ENCODE measurements at regions of chr13 and their contacts with region 1.

Region 1: DNA sequence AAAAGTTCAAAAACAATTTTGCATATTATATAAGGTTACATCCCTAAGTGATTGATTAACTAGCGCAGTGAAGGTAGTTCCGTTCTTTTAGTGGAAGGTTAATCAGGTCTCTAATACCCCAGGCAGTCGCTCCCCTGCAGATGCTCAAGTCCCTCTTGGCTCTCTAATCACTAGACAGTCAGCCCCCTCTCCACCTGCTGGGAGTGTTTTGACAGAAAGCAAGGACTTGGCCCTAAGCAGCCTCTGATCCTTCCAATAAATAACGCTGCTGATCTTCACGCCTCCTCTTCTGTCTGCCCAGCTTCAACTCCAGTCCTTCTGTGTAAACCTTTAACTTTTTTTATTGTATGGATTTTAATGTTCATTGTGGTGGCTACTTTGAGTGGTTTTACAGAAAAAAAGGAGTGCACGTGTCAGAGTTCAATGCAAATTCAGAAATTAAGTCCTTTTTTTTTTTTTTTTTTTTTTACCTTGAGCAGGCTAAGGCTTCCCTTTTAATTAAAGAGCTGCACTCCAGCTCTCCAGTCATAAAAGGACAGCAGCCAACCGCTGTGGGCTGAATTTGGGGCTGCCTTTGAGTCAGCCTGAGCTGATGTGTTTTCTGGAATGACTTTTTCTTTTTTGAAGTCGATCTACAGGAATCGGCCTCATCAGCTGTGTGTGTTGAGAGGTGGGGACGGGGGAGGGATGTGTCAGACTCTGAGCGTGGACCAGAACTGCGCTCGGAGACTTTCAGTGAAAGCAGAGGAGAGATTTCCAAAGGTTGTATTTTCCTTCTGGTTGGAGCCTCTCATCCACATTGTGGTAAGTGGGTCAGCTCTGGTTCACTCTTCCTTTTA is 33.8 kb upstream of the MYO16 start:
- DNase-seq: peak; percentile 82
- H3K4me3 Mint-ChIP-seq: no peak overlapping the region
- H3K27ac Mint-ChIP-seq: no peak overlapping the region
- H3K4me1 Mint-ChIP-seq: peaks cover 16% of the 10 kb centered on the region
- H3K27me3 Mint-ChIP-seq: peaks cover 10% of the 10 kb centered on the region

Region 2: GRCh38 chr13:108495646-108496361 is 99.9 kb before region 1 on chr13:
- CTCF ChIA-PET with region 1: no interaction called
- POLR2A ChIA-PET with region 1: no interaction called
- intact Hi-C with region 1: loop called (anchors 10 kb)
- DNase-seq: peak; percentile 36
- H3K4me3 Mint-ChIP-seq: peak overlapping the region; percentile 80
- H3K27ac Mint-ChIP-seq: no peak overlapping the region
- H3K4me1 Mint-ChIP-seq: peaks cover 20% of the 10 kb centered on the region
- H3K27me3 Mint-ChIP-seq: peaks cover 17% of the 10 kb centered on the region

Region 3: DNA sequence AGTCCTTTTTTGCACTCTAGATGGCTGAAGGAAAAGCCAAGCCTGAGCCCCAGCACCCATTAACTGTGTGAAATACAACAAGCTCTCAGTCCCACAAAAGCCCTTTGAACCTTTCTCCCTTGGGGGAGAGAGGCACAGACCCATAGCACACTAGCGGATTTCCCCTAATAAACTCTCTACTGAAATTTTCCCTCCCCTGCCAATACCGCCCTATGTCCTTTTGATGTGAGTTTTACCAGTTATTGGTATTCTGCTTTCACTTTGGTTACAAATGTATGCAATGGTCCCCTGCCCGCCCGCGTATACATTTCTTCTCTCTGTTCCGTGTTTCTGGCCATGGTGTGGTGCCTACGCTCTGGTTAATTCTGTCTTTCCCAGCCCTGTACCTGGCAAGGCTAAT is 20.2 kb before region 1 on chr13:
- CTCF ChIA-PET with region 1: no interaction called
- POLR2A ChIA-PET with region 1: no interaction called
- intact Hi-C with region 1: loop called (anchors 2 kb)
- DNase-seq: no peak
- H3K4me3 Mint-ChIP-seq: no peak overlapping the region
- H3K27ac Mint-ChIP-seq: no peak overlapping the region
- H3K4me1 Mint-ChIP-seq: no peaks in the 10 kb centered on the region
- H3K27me3 Mint-ChIP-seq: no peaks in the 10 kb centered on the region

Region 4: DNA sequence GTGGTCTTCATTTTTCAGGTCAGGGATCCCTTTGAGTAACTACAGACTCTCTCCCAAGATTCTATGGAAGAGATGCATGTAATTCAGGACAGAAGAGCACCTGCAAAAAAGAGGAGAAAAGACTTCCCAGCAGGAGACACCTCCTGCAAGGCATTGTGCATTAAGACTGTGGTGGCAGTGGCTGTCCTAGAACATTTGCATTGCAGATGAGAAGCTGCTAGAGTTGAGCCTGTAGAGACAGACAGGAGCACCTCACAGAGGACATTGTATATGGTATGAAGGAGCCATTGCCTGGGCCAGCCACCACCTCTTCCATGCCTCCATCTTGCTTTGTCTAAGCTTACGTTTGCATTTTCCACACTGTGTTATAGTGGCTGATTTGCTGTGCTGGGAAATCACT is 22.6 kb after region 1 on chr13:
- CTCF ChIA-PET with region 1: no interaction called
- POLR2A ChIA-PET with region 1: no interaction called
- intact Hi-C with region 1: no loop called
- DNase-seq: no peak
- H3K4me3 Mint-ChIP-seq: no peak overlapping the region
- H3K27ac Mint-ChIP-seq: no peak overlapping the region
- H3K4me1 Mint-ChIP-seq: no peaks in the 10 kb centered on the region
- H3K27me3 Mint-ChIP-seq: no peaks in the 10 kb centered on the region

Region 5: DNA sequence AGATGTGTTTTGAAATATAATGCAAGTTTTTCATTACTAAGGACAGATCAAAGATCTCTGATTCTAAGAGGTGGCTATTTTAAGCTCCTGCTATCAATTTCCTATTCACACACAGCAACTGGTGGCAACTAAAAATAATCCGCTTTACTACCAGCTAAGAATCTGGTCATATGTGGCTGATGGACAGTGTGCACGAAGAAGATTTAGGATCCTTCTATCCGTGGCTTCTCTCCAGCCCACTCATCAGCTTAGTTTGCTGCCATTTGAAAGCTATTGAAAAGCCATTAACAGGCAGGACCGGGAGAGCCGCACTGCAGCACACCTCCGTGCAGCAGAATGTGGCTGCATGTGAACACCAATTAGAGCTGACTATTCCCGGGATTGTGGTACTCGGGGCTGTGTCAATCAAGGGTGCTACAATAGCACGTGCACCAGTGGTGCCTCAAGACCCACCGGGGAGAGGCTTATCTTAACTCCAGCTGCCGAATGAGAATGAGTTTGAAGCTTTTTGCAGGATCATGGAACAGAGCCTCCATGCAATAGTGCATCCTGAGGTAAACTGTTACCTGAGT is 33.6 kb after region 1 on chr13 and contains the start of gene MYO16:
- CTCF ChIA-PET with region 1: no interaction called
- POLR2A ChIA-PET with region 1: no interaction called
- intact Hi-C with region 1: no loop called
- DNase-seq: no peak
- H3K4me3 Mint-ChIP-seq: no peak within 1 kb of the TSS
- H3K27ac Mint-ChIP-seq: no peak within 1 kb of the TSS
- H3K4me1 Mint-ChIP-seq: no peaks in the 10 kb centered on the region
- H3K27me3 Mint-ChIP-seq: no peaks in the 10 kb centered on the region
- total RNA-seq, gene MYO16: 0.07 to 0.10 TPM

Measured in activated CD4-positive, alpha-beta memory T cell treated with anti-CD3 and anti-CD28 coated beads for 36 hours (primary cell).